ENCODE measurements at regions of chr11 and their contacts with region 1.

Region 1: DNA sequence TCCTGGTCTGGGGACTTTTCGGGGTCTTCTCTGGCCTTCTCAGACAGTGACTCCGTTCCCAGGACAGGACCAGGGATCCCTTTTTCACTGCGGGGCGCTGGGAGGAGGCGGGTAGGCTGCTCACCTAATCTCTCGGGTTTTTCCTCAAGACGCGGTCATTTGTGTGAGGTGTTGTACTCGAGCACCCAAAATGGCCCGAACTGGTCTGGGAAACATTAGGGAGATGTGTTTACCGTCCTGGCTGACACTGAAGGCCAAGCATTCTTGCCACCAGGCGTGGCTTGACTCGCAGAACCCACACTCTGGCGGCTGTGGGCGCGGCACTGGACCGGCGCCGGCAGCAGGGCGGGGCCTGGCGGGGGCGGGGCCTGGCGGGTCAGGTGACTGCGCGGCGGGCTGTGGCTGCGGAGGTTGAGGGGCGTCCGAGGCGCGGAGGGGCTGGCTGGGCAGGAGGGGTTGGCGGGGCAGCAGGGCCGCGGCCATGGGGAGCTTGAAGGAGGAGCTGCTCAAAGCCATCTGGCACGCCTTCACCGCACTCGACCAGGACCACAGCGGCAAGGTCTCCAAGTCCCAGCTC is at the start of gene SWAP70:
- DNase-seq: peak; percentile 72
- H3K4me3 Mint-ChIP-seq: peak within 1 kb of the TSS; percentile 85
- H3K27ac Mint-ChIP-seq: peak within 1 kb of the TSS; percentile 53
- H3K4me1 Mint-ChIP-seq: peaks cover 17% of the 10 kb centered on the region
- H3K27me3 Mint-ChIP-seq: peaks cover 35% of the 10 kb centered on the region
- total RNA-seq, gene SWAP70: 8.2 to 9.5 TPM

Region 2: GRCh38 chr11:9607511-9607899 is 56.3 kb before region 1 on chr11:
- CTCF ChIA-PET with region 1: no interaction called
- intact Hi-C with region 1: no loop called
- DNase-seq: no peak
- H3K4me3 Mint-ChIP-seq: no peak overlapping the region
- H3K27ac Mint-ChIP-seq: no peak overlapping the region
- H3K4me1 Mint-ChIP-seq: peaks cover 8% of the 10 kb centered on the region
- H3K27me3 Mint-ChIP-seq: no peaks in the 10 kb centered on the region

Region 3: DNA sequence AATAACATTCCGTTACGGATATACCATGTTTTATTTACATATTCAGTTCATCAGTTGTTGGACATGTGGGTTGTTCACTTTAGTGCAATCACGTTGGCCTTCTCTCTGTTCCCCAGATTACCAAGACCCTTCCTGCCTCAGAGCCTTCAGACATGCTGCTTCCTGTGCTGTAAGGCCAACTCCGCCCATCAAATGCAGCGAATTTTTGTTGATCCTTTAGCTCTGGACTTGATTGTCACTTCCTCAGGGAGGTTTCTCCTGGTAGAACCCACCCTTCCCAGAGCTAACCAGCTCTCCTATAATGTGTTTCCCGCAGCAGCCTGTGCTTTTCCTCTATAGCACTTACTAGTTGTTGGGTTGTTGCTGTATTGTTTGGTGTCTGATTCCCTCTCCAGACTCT is 39.5 kb after region 1 on chr11:
- CTCF ChIA-PET with region 1: interaction called, 4 read pairs
- intact Hi-C with region 1: loop called (anchors 5 kb)
- DNase-seq: no peak
- H3K4me3 Mint-ChIP-seq: no peak overlapping the region
- H3K27ac Mint-ChIP-seq: no peak overlapping the region
- H3K4me1 Mint-ChIP-seq: peaks cover 19% of the 10 kb centered on the region
- H3K27me3 Mint-ChIP-seq: no peaks in the 10 kb centered on the region

Measured in activated naive CD4-positive, alpha-beta T cell treated with anti-CD3 and anti-CD28 coated beads for 36 hours (primary cell).